Activated naive CD4-positive, alpha-beta T cell treated with anti-CD3 and anti-CD28 coated beads, Interleukin-2, amount 10 ng/mL, durations not matched to agents 7 days and 5 days (primary cell): ENCODE measurements at regions of chr20 and their contacts with region 1.

Region 1: GRCh38 chr20:35741892-35742740 is at the start of gene RBM39:
- DNase-seq: peak; percentile 100
- H3K4me3 Mint-ChIP-seq: peak within 1 kb of the TSS; percentile 86
- H3K27ac Mint-ChIP-seq: peak within 1 kb of the TSS; percentile 98
- H3K4me1 Mint-ChIP-seq: peaks cover 45% of the 10 kb centered on the region
- H3K27me3 Mint-ChIP-seq: no peaks in the 10 kb centered on the region

Region 2: DNA sequence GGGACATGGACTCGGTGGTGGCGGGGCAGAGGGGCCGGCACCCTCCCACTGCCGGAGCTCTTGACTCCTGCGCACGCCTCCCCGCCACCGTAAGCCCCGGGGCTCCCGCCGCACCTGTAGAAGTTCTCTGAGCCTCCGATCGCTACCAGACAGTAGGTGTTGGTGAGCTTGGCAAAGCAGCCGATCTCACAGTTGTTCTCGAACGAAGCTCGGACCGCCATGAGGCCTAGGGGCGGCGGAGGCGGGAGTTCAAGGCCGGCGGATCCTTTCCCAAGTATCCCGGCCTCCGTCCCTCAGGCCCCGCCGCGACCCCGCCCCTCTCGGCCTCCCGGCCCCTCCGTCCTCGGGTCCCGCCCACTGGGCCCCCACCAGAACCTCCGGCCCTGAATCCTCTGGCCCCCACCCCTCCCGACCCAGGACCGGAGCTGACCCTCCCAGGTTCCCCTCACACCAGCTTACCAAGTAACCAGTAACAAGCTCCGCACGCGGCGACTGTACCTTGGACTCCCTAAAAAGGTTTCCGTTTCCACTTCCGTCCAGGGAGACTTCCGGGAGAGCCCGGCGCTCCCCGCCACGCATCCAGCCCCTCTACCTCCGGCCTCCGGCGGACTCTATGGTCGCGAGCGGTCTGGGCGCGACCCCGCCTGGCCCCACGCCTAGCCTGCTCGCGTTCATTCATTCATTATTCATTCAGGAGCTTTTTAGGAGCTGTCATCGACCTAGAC is 457.7 kb before region 1 on chr20 and contains the start of gene EIF6:
- CTCF ChIA-PET with region 1: no interaction called
- DNase-seq: peak; percentile 87
- H3K4me3 Mint-ChIP-seq: peak within 1 kb of the TSS; percentile 81
- H3K27ac Mint-ChIP-seq: peak within 1 kb of the TSS; percentile 89
- H3K4me1 Mint-ChIP-seq: peaks cover 32% of the 10 kb centered on the region
- H3K27me3 Mint-ChIP-seq: peaks cover 9% of the 10 kb centered on the region

Region 3: GRCh38 chr20:35729836-35730582 is 12.1 kb before region 1 on chr20:
- CTCF ChIA-PET with region 1: interaction called, 10 read pairs
- DNase-seq: no peak
- H3K4me3 Mint-ChIP-seq: no peak overlapping the region
- H3K27ac Mint-ChIP-seq: no peak overlapping the region
- H3K4me1 Mint-ChIP-seq: peaks cover 39% of the 10 kb centered on the region
- H3K27me3 Mint-ChIP-seq: no peaks in the 10 kb centered on the region

Region 4: DNA sequence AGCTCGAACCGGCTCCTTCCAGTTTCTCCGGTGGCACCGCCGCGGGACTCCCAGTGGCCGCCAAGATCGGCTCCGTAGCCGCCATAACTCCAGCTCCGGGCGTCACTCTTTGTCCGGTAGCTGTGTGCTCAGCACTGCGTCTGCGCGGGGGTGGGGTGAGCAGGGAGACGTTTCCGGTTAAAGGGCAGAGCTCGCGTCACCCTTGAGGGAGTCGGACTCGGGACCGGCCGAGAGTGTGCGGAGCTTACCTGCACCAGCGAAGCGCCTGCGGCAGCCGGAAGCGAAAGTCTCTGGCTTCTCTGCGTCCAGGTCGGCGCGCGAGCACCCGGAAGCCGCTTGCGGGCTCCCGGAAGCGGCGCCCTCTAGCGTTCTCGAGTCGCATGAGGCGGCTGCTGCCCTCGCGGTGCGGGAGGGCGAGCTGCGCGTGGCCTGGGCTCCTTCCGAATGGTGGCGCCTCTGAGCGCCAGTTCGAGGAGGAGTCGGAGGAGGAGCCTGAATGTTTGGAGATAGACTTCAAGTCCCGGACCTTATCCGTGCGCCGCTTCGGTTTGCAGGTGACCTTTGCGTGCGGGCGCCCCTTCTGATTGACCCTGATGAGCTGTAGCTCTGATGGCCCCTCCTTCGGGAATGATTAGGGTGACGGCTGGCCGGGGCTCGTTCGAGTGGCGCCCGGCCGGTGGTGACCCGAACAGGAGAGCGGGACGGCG is 212.2 kb after region 1 on chr20 and contains the start of gene SCAND1:
- CTCF ChIA-PET with region 1: interaction called, 21 read pairs
- DNase-seq: peak; percentile 98
- H3K4me3 Mint-ChIP-seq: peak within 1 kb of the TSS; percentile 98
- H3K27ac Mint-ChIP-seq: peak within 1 kb of the TSS; percentile 99
- H3K4me1 Mint-ChIP-seq: peaks cover 28% of the 10 kb centered on the region
- H3K27me3 Mint-ChIP-seq: peaks cover 7% of the 10 kb centered on the region